ENCODE measurements at regions of chr10 and their contacts with region 1.

Region 1: GRCh38 chr10:15531927-15532722 is 161.0 kb upstream of the FAM171A1 start:
- DNase-seq: no peak
- H3K4me3 ChIP-seq: no peak overlapping the region
- H3K27ac ChIP-seq: peak overlapping the region; percentile 82 to 86
- H3K4me1 ChIP-seq: peaks cover 3 to 28% of the 10 kb centered on the region in 2 donors
- H3K27me3 ChIP-seq: no peaks in the 10 kb centered on the region
- CTCF ChIP-seq: no peak

Region 2: GRCh38 chr10:15485684-15486316 is 46.3 kb before region 1 on chr10:
- intact Hi-C with region 1: loop called (anchors 5 kb)
- DNase-seq: peak; percentile 58 to 92
- H3K4me3 ChIP-seq: no peak overlapping the region
- H3K27ac ChIP-seq: peak overlapping the region; percentile 85 to 91
- H3K4me1 ChIP-seq: peaks cover 15 to 58% of the 10 kb centered on the region in 2 donors
- H3K27me3 ChIP-seq: no peaks in the 10 kb centered on the region
- CTCF ChIP-seq: peak in 1 of 3 experiments; percentile 4

Region 3: GRCh38 chr10:15567581-15568351 is 35.6 kb after region 1 on chr10:
- intact Hi-C with region 1: loop called (anchors 5 kb)
- DNase-seq: no peak
- H3K4me3 ChIP-seq: no peak overlapping the region
- H3K27ac ChIP-seq: peak overlapping the region; percentile 40 to 69
- H3K4me1 ChIP-seq: peaks cover 0 to 28% of the 10 kb centered on the region in 2 donors
- H3K27me3 ChIP-seq: no peaks in the 10 kb centered on the region
- CTCF ChIP-seq: no peak

Region 4: GRCh38 chr10:16304311-16304710 is 772.2 kb after region 1 on chr10:
- intact Hi-C with region 1: no loop called
- DNase-seq: no peak
- H3K4me3 ChIP-seq: no peak overlapping the region
- H3K27ac ChIP-seq: no peak overlapping the region
- H3K4me1 ChIP-seq: no peaks in the 10 kb centered on the region
- H3K27me3 ChIP-seq: no peaks in the 10 kb centered on the region
- CTCF ChIP-seq: no peak

Measured in ascending aorta (tissue), 2 donors.